ENCODE measurements at regions of chr15 and their contacts with region 1.

Region 1: GRCh38 chr15:81274931-81275707 is 48.8 kb downstream of the STARD5 start:
- DNase-seq: peak; percentile 84 to 90 (median 88)
- H3K4me3 ChIP-seq: no peak overlapping the region
- H3K27ac ChIP-seq: no peak overlapping the region
- H3K4me1 ChIP-seq: peaks cover 2 to 7% (median 5%) of the 10 kb centered on the region in 4 experiments
- H3K27me3 ChIP-seq: no peaks in the 10 kb centered on the region

Region 2: GRCh38 chr15:80031841-80032240 is 1243.3 kb before region 1 on chr15:
- CTCF ChIA-PET with region 1: no interaction called
- POLR2A ChIA-PET with region 1: no interaction called
- DNase-seq: no peak
- H3K4me3 ChIP-seq: no peak overlapping the region
- H3K27ac ChIP-seq: no peak overlapping the region
- H3K4me1 ChIP-seq: peaks cover 4 to 14% (median 11%) of the 10 kb centered on the region in 4 experiments
- H3K27me3 ChIP-seq: no peaks in the 10 kb centered on the region

Region 3: DNA sequence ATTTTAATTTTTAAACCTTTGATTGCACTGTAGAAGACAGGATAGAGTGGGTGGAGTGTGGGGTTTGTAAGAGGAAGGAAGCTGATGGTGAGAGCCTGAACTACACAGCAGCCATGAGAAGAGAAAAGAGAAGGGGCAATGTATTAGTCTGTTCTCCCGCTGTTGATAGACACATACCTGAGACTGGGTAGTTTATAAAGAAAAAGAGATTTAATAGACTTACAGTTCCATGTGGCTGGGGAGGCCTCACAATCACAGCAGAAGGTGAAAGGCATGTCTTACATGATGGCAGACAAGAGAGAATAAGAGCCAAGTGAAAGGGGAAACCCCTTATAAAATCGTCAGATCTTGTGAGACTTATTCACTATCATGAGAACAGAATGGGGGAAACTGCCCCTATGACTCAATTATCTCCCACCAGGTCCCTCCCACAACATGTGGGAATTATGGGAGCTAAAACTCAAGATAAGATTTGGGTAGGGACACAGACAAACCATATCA is 11.6 kb after region 1 on chr15:
- CTCF ChIA-PET with region 1: interaction called, 15 read pairs
- POLR2A ChIA-PET with region 1: no interaction called
- DNase-seq: peak in 2 of 3 donors; percentile 74 to 81
- H3K4me3 ChIP-seq: peak overlapping the region in 3 of 7 experiments; percentile 14 to 51 (median 23)
- H3K27ac ChIP-seq: peak overlapping the region in 1 of 2 experiments; percentile 56
- H3K4me1 ChIP-seq: peaks cover 37 to 51% (median 45%) of the 10 kb centered on the region in 4 experiments
- H3K27me3 ChIP-seq: no peaks in the 10 kb centered on the region

Region 4: DNA sequence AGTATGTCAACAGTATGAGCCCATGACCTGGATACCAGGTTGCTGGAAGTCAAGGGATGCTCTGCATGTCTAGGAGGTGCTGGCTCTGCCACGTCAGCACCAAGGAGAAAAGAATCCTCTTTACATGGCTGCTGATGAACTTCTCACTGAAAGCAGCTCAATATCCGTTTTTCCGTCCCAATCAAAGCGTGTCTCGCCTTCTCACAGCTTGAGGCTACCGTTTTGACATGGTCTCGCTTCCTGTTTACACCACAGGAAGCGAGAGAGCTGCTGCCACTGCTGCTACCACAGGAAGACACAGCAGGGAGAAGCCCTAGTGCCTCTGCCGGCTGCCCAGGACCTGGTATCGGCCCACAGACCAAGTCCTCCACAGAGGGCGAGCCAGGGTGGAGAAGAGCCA is 21.6 kb after region 1 on chr15:
- CTCF ChIA-PET with region 1: interaction called, 15 read pairs
- POLR2A ChIA-PET with region 1: no interaction called
- DNase-seq: peak; percentile 72 to 93 (median 89)
- H3K4me3 ChIP-seq: peak overlapping the region; percentile 49 to 84 (median 73)
- H3K27ac ChIP-seq: peak overlapping the region; percentile 55 to 73
- H3K4me1 ChIP-seq: peaks cover 59 to 100% (median 98%) of the 10 kb centered on the region in 4 experiments
- H3K27me3 ChIP-seq: no peaks in the 10 kb centered on the region

Region 5: DNA sequence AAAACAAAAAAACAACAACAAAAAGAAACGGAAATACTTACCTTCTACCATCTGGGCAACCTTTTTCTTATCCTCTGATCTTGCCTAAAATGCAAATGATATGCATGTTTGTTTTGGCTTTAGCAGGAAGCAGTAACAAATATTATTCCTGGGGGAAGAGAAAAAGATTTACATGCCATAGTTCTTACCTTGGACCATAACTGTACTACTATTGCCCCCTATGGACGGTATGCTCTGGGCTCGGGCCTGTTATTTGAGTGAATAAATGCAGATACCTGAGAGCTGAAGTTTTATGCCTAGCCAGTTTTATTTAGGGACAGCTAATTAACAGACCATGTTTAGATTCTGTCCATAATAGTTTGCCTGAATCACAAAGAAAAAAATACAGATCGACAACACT is 61.4 kb after region 1 on chr15:
- CTCF ChIA-PET with region 1: interaction called, 69 read pairs
- POLR2A ChIA-PET with region 1: no interaction called
- DNase-seq: peak; percentile 28 to 34 (median 29)
- H3K4me3 ChIP-seq: no peak overlapping the region
- H3K27ac ChIP-seq: no peak overlapping the region
- H3K4me1 ChIP-seq: peaks cover 0 to 23% (median 5%) of the 10 kb centered on the region in 4 experiments
- H3K27me3 ChIP-seq: no peaks in the 10 kb centered on the region

Region 6: GRCh38 chr15:81394603-81395002 is 119.5 kb after region 1 on chr15:
- CTCF ChIA-PET with region 1: interaction called, 162 read pairs
- POLR2A ChIA-PET with region 1: no interaction called
- DNase-seq: no peak
- H3K4me3 ChIP-seq: no peak overlapping the region
- H3K27ac ChIP-seq: no peak overlapping the region
- H3K4me1 ChIP-seq: no peaks in the 10 kb centered on the region
- H3K27me3 ChIP-seq: no peaks in the 10 kb centered on the region